ENCODE measurements at regions of chr3 and their contacts with region 1.

Region 1: GRCh38 chr3:99842826-99843589 is 25.3 kb downstream of the CMSS1 start:
- DNase-seq: peak; percentile 52
- H3K4me3 Mint-ChIP-seq: no peak overlapping the region
- H3K27ac Mint-ChIP-seq: no peak overlapping the region
- H3K4me1 Mint-ChIP-seq: no peaks in the 10 kb centered on the region
- H3K27me3 Mint-ChIP-seq: no peaks in the 10 kb centered on the region
- CTCF ChIP-seq: peak; percentile 69

Region 2: DNA sequence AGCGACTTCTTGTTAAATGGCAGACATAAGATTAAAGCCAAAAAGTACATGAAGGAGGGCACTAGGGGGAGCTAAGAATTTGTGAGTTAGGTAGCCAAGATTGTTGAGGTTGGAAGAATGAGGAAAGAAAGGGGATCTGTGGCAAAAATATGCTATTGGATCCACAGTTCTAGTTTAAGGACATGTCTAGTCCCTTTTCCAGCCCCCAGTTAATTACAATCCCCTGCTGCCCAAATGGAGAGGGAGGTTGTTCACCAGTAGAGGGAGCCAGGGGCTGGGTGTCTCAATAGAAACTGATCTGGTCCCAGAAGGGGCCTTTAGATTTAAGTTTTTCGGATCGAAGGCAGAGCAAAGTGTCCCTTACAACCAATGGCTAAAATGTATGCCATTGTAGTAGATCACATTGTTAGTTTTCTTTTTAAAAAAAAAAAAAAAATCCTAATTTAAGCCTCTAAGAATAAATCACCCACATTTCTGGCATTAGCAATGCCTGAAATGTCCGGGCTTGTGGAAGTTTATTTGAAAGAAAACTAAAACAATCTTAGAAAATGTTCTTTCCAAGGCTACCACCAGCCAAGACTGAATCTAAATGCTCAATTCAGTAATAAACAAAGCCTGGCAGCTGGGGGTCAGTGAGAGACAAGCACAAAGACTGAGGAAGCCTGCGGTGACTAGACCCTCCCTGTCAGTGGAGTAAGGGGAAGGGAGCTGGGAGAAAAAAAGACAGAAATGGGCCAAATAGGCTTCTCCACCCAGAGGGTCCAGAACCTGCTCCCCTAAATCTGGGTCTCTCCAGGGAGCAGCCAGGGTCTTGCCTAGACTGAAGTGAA is 197.5 kb before region 1 on chr3:
- CTCF ChIA-PET with region 1: no interaction called
- POLR2A ChIA-PET with region 1: no interaction called
- intact Hi-C with region 1: no loop called
- DNase-seq: peak; percentile 57
- H3K4me3 Mint-ChIP-seq: no peak overlapping the region
- H3K27ac Mint-ChIP-seq: peak overlapping the region; percentile 63
- H3K4me1 Mint-ChIP-seq: peaks cover 84% of the 10 kb centered on the region
- H3K27me3 Mint-ChIP-seq: no peaks in the 10 kb centered on the region
- CTCF ChIP-seq: peak; percentile 85

Region 3: DNA sequence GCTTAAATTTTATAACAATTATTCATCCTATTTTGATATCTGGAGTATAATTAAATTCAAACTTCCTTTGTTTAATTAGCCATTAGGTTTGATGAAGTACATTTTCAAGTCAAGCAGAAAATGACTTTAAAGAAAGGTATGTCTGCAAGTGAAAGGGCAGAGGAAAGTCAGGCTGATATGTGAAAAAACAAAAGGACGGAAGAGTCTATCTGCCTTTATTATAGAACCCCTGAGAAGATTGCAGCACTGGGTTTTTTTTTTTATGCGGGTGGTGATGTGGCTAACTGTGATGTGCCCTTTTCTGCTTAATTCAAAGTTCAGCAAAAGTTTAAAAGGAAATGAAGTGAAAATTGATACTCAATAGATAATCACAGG is 121.4 kb before region 1 on chr3:
- CTCF ChIA-PET with region 1: no interaction called
- POLR2A ChIA-PET with region 1: no interaction called
- intact Hi-C with region 1: no loop called
- DNase-seq: no peak
- H3K4me3 Mint-ChIP-seq: no peak overlapping the region
- H3K27ac Mint-ChIP-seq: peak overlapping the region; percentile 84
- H3K4me1 Mint-ChIP-seq: peaks cover 32% of the 10 kb centered on the region
- H3K27me3 Mint-ChIP-seq: no peaks in the 10 kb centered on the region
- CTCF ChIP-seq: no peak

Region 4: GRCh38 chr3:99795573-99795972 is 47.4 kb before region 1 on chr3:
- CTCF ChIA-PET with region 1: no interaction called
- POLR2A ChIA-PET with region 1: no interaction called
- intact Hi-C with region 1: no loop called
- DNase-seq: no peak
- H3K4me3 Mint-ChIP-seq: no peak overlapping the region
- H3K27ac Mint-ChIP-seq: no peak overlapping the region
- H3K4me1 Mint-ChIP-seq: no peaks in the 10 kb centered on the region
- H3K27me3 Mint-ChIP-seq: no peaks in the 10 kb centered on the region
- CTCF ChIP-seq: no peak

Region 5: GRCh38 chr3:99825004-99825640 is 17.9 kb before region 1 on chr3:
- CTCF ChIA-PET with region 1: interaction called, 23 read pairs
- POLR2A ChIA-PET with region 1: no interaction called
- intact Hi-C with region 1: no loop called
- DNase-seq: no peak
- H3K4me3 Mint-ChIP-seq: peak overlapping the region; percentile 4
- H3K27ac Mint-ChIP-seq: no peak overlapping the region
- H3K4me1 Mint-ChIP-seq: peaks cover 18% of the 10 kb centered on the region
- H3K27me3 Mint-ChIP-seq: no peaks in the 10 kb centered on the region
- CTCF ChIP-seq: no peak

Region 6: DNA sequence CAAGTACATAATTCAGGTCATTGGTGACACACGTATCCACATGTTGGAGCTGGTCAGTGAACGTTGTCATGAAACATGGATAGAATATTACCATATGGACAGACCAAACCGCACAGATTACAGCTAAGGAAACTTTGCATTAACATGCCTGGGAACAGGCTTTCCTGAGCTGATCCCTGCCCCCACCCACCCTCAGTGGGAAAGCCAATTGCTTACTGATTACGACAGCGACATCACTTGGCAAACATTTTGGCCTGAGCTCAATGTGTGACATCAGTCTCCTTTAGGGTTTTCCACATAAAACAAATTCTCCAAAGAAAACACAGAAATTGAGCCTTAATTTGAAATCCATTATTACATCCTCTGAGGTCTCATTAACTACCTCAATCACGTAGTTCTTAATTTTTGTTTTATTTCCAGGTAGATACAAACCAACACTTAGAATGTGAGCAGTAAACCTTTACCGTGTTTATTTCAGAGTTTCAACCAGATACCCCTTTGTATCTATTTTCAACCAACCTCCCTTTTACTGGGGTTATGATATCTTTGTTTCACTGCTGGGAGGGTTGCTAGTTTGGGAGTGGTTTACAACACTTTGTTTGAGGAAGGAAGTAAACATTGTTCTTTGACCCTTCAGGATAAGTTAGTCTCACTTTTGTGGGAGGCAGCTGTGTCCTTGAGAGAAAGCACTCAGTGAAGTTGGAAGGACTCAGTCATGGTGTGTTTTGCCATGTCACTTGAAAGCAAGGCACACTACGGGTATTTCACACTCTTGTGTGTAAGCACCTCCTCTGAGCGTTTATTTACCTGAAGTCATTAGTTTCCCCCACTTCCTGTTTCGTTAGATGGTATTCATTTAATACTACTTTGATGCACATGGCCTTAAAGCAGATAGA is 77.7 kb after region 1 on chr3:
- CTCF ChIA-PET with region 1: interaction called, 5 read pairs
- POLR2A ChIA-PET with region 1: no interaction called
- intact Hi-C with region 1: loop called (anchors 5 kb)
- DNase-seq: peak; percentile 73
- H3K4me3 Mint-ChIP-seq: no peak overlapping the region
- H3K27ac Mint-ChIP-seq: peak overlapping the region; percentile 85
- H3K4me1 Mint-ChIP-seq: peaks cover 19% of the 10 kb centered on the region
- H3K27me3 Mint-ChIP-seq: no peaks in the 10 kb centered on the region
- CTCF ChIP-seq: no peak

Region 7: GRCh38 chr3:100032243-100032642 is 189.2 kb after region 1 on chr3:
- CTCF ChIA-PET with region 1: interaction called, 11 read pairs
- POLR2A ChIA-PET with region 1: interaction called, 3 read pairs
- intact Hi-C with region 1: no loop called
- DNase-seq: peak; percentile 34
- H3K4me3 Mint-ChIP-seq: peak overlapping the region; percentile 36
- H3K27ac Mint-ChIP-seq: peak overlapping the region; percentile 68
- H3K4me1 Mint-ChIP-seq: peaks cover 19% of the 10 kb centered on the region
- H3K27me3 Mint-ChIP-seq: no peaks in the 10 kb centered on the region
- CTCF ChIP-seq: no peak

Region 8: GRCh38 chr3:100047455-100048141 is 204.6 kb after region 1 on chr3:
- CTCF ChIA-PET with region 1: interaction called, 15 read pairs
- POLR2A ChIA-PET with region 1: interaction called, 5 read pairs
- intact Hi-C with region 1: loop called (anchors 1 kb)
- DNase-seq: peak; percentile 74
- H3K4me3 Mint-ChIP-seq: peak overlapping the region; percentile 22
- H3K27ac Mint-ChIP-seq: peak overlapping the region; percentile 85
- H3K4me1 Mint-ChIP-seq: peaks cover 44% of the 10 kb centered on the region
- H3K27me3 Mint-ChIP-seq: no peaks in the 10 kb centered on the region
- CTCF ChIP-seq: no peak

Region 9: DNA sequence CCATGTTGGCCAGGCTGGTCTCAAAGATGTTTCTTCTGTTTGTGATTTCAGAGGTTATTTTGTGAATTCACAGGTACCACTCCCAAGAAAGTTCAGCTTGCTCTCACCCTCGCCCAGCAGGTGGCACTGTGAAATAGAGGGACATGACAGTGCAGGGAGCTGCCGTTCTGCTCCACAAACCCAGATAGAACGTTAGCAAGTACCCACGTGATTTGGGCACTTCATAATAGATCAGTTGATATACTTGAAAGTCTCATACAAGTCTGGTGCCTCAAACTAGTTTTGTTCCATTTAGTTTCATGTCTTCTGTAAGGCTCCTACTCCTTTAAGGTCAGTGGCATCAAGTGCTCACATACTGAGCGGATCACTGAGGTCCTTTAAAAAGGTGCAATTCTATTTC is 225.8 kb after region 1 on chr3:
- CTCF ChIA-PET with region 1: interaction called, 14 read pairs
- POLR2A ChIA-PET with region 1: no interaction called
- intact Hi-C with region 1: no loop called
- DNase-seq: peak; percentile 84
- H3K4me3 Mint-ChIP-seq: no peak overlapping the region
- H3K27ac Mint-ChIP-seq: no peak overlapping the region
- H3K4me1 Mint-ChIP-seq: peaks cover 7% of the 10 kb centered on the region
- H3K27me3 Mint-ChIP-seq: no peaks in the 10 kb centered on the region
- CTCF ChIP-seq: peak; percentile 66

Region 10: GRCh38 chr3:100079328-100079727 is 236.3 kb after region 1 on chr3:
- CTCF ChIA-PET with region 1: no interaction called
- POLR2A ChIA-PET with region 1: no interaction called
- intact Hi-C with region 1: no loop called
- DNase-seq: no peak
- H3K4me3 Mint-ChIP-seq: no peak overlapping the region
- H3K27ac Mint-ChIP-seq: no peak overlapping the region
- H3K4me1 Mint-ChIP-seq: no peaks in the 10 kb centered on the region
- H3K27me3 Mint-ChIP-seq: no peaks in the 10 kb centered on the region
- CTCF ChIP-seq: no peak

Region 11: GRCh38 chr3:100254168-100254777 is 411.3 kb after region 1 on chr3:
- CTCF ChIA-PET with region 1: interaction called, 42 read pairs
- POLR2A ChIA-PET with region 1: interaction called, 4 read pairs
- intact Hi-C with region 1: loop called (anchors 1 kb)
- DNase-seq: peak; percentile 68
- H3K4me3 Mint-ChIP-seq: no peak overlapping the region
- H3K27ac Mint-ChIP-seq: no peak overlapping the region
- H3K4me1 Mint-ChIP-seq: no peaks in the 10 kb centered on the region
- H3K27me3 Mint-ChIP-seq: no peaks in the 10 kb centered on the region
- CTCF ChIP-seq: peak; percentile 78